Activated naive CD4-positive, alpha-beta T cell treated with anti-CD3 and anti-CD28 coated beads for 36 hours (primary cell): ENCODE measurements at regions of chr17 and their contacts with region 1.

Region 1: DNA sequence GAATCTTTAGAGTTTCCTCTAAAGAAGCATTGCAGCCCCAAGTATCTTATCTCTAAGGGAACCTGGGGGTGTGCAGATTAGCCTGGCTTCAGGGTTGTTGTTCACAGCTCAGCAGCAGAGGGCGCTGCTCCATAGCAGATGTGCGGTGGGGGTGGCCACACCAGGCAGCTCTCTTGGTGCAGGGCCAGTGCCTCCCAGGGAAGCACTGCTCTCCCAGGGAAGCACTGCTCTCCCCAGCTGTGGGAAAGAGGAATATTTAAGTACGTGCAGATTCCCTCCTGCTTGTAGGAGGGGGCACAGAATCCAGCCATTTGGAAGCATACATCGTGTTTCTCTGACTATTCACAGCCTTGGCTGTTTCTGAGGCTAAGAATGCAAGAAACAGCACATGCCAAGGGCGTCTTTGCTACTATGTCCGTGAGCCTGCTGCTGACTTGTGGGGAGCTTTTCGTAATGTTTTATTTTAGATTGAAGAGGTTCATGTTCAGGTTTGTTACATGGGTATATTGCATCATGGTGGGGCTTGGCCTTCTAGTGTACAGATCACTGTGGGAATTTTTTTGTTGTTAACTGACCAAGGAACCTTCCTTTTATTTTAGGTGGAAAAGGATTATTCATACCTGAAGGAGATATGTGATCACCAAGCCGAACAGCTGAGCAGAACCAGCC is 217.8 kb downstream of the SPECC1 start:
- DNase-seq: peak; percentile 89
- H3K4me3 Mint-ChIP-seq: no peak overlapping the region
- H3K27ac Mint-ChIP-seq: no peak overlapping the region
- H3K4me1 Mint-ChIP-seq: peaks cover 19% of the 10 kb centered on the region
- H3K27me3 Mint-ChIP-seq: no peaks in the 10 kb centered on the region

Region 2: DNA sequence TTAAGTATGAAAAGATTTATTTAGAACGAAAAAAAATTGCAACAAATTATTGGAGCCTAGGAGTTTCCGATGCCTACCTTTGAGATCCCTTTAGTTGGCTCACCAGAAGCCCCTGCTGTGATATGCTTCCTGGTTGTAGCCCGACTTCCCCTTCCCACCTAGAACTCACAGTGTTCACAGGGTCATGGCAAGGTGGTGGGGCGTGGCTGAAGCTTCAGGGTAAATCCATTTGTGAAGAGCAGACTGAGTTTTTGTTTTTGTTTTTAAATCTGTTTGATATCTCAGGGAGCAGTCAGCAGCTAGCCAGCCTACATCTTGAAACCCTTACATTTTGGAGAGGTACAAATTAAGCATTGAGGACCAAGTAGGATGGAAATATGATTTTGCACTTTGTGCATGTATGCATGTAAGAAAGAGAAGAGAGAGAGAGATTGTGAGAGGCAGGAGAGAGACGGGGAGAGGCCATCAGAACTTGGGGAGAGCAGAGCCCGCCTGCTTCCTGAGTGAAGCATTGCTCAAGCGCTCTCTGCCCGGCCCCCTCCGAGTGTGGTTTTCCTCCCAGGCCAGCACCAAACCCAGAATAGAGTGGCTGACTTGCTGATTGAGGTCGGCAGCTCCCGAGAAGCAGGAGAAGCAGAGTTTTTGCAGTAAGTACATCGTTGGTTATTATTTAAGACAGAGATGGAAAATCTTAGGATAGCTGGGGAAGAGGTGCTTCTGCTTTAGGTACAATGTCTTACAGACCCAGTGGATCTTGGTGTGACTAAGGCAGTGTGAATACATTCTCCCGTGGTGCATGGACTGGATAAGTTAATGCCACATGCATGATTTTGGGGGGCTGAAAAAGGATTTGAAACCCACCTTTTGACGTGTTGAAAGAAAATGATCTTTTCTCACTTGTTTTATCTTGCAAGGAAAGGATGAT is 153.6 kb before region 1 on chr17:
- CTCF ChIA-PET with region 1: no interaction called
- intact Hi-C with region 1: no loop called
- DNase-seq: peak; percentile 50
- H3K4me3 Mint-ChIP-seq: peak overlapping the region; percentile 12
- H3K27ac Mint-ChIP-seq: no peak overlapping the region
- H3K4me1 Mint-ChIP-seq: peaks cover 19% of the 10 kb centered on the region
- H3K27me3 Mint-ChIP-seq: peaks cover 2% of the 10 kb centered on the region

Region 3: GRCh38 chr17:20121359-20122253 is 105.3 kb before region 1 on chr17:
- CTCF ChIA-PET with region 1: interaction called, 25 read pairs
- intact Hi-C with region 1: loop called (anchors 1 kb)
- DNase-seq: peak; percentile 80
- H3K4me3 Mint-ChIP-seq: no peak overlapping the region
- H3K27ac Mint-ChIP-seq: no peak overlapping the region
- H3K4me1 Mint-ChIP-seq: no peaks in the 10 kb centered on the region
- H3K27me3 Mint-ChIP-seq: no peaks in the 10 kb centered on the region

Region 4: GRCh38 chr17:20171741-20172365 is 55.1 kb before region 1 on chr17:
- CTCF ChIA-PET with region 1: no interaction called
- intact Hi-C with region 1: no loop called
- DNase-seq: no peak
- H3K4me3 Mint-ChIP-seq: no peak overlapping the region
- H3K27ac Mint-ChIP-seq: no peak overlapping the region
- H3K4me1 Mint-ChIP-seq: no peaks in the 10 kb centered on the region
- H3K27me3 Mint-ChIP-seq: no peaks in the 10 kb centered on the region

Region 5: DNA sequence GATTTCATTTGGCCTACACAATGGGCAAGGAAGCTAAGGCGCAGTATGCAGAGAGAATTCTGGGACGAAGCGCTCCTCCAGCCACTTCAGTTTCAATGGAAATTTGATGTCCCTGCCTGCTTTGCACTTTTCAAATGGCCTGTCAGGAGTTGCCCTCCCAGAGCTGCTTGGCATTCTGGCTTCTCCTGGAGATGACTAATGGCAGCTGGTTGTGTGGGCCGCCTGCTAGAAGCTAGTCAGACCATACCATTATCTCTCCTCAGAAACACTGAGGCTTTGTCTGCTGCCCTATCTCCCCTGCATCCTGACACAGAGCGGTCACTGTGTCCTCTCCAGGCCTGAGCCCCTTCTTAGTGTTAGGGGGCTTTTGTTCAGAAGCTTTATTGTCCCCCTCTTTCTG is 37.6 kb before region 1 on chr17:
- CTCF ChIA-PET with region 1: no interaction called
- intact Hi-C with region 1: no loop called
- DNase-seq: no peak
- H3K4me3 Mint-ChIP-seq: no peak overlapping the region
- H3K27ac Mint-ChIP-seq: no peak overlapping the region
- H3K4me1 Mint-ChIP-seq: peaks cover 3% of the 10 kb centered on the region
- H3K27me3 Mint-ChIP-seq: no peaks in the 10 kb centered on the region

Region 6: GRCh38 chr17:20244671-20245070 is 17.7 kb after region 1 on chr17:
- CTCF ChIA-PET with region 1: interaction called, 19 read pairs
- intact Hi-C with region 1: no loop called
- DNase-seq: no peak
- H3K4me3 Mint-ChIP-seq: no peak overlapping the region
- H3K27ac Mint-ChIP-seq: no peak overlapping the region
- H3K4me1 Mint-ChIP-seq: peaks cover 45% of the 10 kb centered on the region
- H3K27me3 Mint-ChIP-seq: no peaks in the 10 kb centered on the region

Region 7: GRCh38 chr17:20278805-20279204 is 51.9 kb after region 1 on chr17:
- CTCF ChIA-PET with region 1: interaction called, 20 read pairs
- intact Hi-C with region 1: loop called (anchors 2 kb)
- DNase-seq: no peak
- H3K4me3 Mint-ChIP-seq: no peak overlapping the region
- H3K27ac Mint-ChIP-seq: no peak overlapping the region
- H3K4me1 Mint-ChIP-seq: peaks cover 75% of the 10 kb centered on the region
- H3K27me3 Mint-ChIP-seq: no peaks in the 10 kb centered on the region